Cardiac septum (tissue), 1 donor: ENCODE measurements at regions of chr10 and their contacts with region 1.

Region 1: GRCh38 chr10:103781329-103782061 is 73.9 kb downstream of the SH3PXD2A start:
- DNase-seq: no peak

Region 2: GRCh38 chr10:103727546-103727963 is 53.9 kb before region 1 on chr10:
- intact Hi-C with region 1: loop called (anchors 5 kb)
- DNase-seq: no peak